ENCODE measurements at regions of chr1 and their contacts with region 1.

Region 1: DNA sequence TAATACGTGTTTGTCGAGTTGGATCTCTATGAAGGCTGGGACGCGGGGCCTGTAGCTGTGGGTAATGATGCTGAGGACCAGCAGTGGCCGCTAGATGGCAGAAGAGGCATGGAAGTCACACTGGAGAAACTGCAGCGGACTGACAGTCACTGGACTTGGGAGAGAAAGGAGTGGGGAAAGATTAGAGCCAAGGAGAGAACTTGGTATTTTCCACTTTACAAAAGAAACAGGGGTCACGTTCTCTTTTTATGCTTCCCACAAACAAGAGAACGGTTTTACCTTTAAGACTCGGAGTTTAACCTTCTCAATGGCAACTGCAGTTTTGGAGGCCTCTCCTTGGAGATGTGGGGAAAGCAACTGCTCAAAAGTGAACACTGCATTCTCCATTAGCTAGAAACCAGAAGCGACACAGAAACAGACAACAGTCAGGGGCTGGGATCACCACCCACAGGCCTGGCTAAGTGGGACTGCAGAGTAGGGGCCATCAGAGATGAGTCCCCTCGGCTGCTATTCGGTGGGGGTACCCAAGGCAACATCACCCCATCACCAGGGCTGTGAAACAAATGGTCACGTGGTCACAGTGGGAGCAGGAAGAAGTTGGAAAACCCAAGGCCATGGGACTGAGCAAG is 51.1 kb upstream of the EDEM3 start:
- DNase-seq: peak; percentile 69 to 91
- H3K4me3 ChIP-seq: no peak overlapping the region
- H3K27ac ChIP-seq: no peak overlapping the region
- H3K4me1 ChIP-seq: no peaks in the 10 kb centered on the region
- H3K27me3 ChIP-seq: no peaks in the 10 kb centered on the region
- CTCF ChIP-seq: peak; percentile 87 to 96 (median 93)
- EP300 ChIP-seq: no peak
- POLR2A ChIP-seq: no peak
- RAD21 ChIP-seq: peak; percentile 98 to 100

Region 2: DNA sequence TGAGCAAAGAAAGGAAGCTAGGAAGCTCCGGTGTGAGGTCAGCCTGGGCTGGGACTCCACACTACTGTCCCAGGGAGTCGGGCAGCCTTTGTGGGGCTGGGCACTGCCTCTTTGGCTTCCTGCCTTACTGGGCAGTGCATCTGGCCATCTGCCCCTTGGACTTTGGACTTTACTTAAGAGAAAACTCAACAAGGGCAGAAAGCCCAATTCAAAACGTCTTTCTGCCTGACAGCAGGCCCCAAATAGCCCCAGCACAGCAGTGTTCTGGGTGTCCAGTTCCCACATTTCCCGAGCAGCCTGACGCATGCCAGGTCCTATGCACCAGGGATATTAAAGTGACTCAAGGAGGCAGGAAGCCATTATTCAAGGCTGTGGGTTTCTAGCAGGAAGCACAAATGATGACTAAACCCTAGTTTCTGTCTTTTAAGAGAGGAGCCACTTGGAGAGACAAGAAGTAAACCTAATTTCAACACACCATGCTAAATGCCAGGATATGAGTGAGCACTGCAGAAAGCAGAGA is 13.3 kb before region 1 on chr1:
- CTCF ChIA-PET with region 1: interaction called, 17 read pairs
- POLR2A ChIA-PET with region 1: interaction called, 3 read pairs
- DNase-seq: no peak
- H3K4me3 ChIP-seq: no peak overlapping the region
- H3K27ac ChIP-seq: no peak overlapping the region
- H3K4me1 ChIP-seq: peaks cover 0 to 4% (median 0%) of the 10 kb centered on the region in 4 experiments; a peak in 1 of 7 replicates
- H3K27me3 ChIP-seq: no peaks in the 10 kb centered on the region
- CTCF ChIP-seq: no peak
- EP300 ChIP-seq: no peak
- POLR2A ChIP-seq: no peak
- RAD21 ChIP-seq: no peak

Region 3: DNA sequence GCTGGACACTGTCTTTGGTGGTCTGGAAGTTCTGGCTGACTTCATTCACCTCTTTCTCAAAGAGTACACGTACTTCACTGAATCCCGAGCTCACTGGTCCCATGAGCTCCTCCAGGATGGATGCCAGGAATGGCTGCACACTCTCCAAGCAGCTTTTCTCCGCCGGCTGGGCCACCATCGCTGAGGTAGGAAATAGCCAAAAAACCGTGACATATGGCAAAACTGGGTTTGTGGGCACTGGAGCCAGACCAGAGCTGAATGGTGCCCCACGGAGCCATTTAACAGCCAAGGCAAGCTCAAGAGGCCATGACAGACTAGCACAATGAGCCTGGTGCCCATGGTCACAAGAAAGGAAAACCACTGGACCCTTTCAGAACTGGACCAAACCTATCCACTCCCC is 12.9 kb after region 1 on chr1:
- CTCF ChIA-PET with region 1: interaction called, 10 read pairs
- POLR2A ChIA-PET with region 1: no interaction called
- DNase-seq: no peak
- H3K4me3 ChIP-seq: no peak overlapping the region
- H3K27ac ChIP-seq: no peak overlapping the region
- H3K4me1 ChIP-seq: no peaks in the 10 kb centered on the region
- H3K27me3 ChIP-seq: no peaks in the 10 kb centered on the region
- CTCF ChIP-seq: no peak
- EP300 ChIP-seq: no peak
- POLR2A ChIP-seq: no peak
- RAD21 ChIP-seq: no peak

Region 4: DNA sequence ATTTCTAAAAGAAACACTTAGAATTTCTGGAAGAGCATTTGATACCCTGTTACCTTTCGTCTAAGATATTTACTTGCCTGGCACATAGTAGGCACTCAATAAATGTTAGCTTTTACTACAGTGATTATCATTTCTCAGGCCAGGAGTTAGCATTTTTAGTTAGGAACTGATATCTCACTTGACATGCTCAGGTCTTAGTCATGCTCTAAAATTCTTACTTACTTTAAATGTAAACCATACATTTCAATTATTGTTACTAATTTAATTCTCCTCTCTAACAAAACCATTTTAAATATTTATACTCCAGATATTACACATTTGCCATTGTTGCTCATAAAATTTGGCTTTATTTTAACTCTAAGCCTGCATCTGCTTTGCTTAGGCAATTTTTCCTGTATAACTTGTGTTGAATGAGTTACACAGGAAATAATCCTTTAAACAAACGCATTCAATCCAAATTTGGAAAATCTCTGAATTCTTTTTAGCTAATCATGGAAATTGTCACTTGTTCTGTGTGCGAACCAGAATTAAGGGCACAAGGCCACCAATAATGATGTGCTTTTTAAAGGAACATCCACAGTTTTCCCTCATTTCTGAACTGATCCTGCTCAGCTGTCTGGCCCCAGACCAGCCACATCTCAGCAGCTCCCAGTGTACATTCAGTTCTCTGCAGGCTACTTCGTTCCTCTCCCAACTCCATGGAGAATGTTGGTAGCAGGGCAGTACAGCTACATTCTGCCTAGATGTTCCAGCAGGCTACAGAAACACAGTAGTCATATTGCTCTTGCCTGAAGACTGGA is 153.0 kb after region 1 on chr1:
- CTCF ChIA-PET with region 1: interaction called, 20 read pairs
- POLR2A ChIA-PET with region 1: no interaction called
- DNase-seq: no peak
- H3K4me3 ChIP-seq: no peak overlapping the region
- H3K27ac ChIP-seq: no peak overlapping the region
- H3K4me1 ChIP-seq: no peaks in the 10 kb centered on the region
- H3K27me3 ChIP-seq: no peaks in the 10 kb centered on the region
- CTCF ChIP-seq: no peak
- EP300 ChIP-seq: no peak
- POLR2A ChIP-seq: no peak
- RAD21 ChIP-seq: no peak

Region 5: DNA sequence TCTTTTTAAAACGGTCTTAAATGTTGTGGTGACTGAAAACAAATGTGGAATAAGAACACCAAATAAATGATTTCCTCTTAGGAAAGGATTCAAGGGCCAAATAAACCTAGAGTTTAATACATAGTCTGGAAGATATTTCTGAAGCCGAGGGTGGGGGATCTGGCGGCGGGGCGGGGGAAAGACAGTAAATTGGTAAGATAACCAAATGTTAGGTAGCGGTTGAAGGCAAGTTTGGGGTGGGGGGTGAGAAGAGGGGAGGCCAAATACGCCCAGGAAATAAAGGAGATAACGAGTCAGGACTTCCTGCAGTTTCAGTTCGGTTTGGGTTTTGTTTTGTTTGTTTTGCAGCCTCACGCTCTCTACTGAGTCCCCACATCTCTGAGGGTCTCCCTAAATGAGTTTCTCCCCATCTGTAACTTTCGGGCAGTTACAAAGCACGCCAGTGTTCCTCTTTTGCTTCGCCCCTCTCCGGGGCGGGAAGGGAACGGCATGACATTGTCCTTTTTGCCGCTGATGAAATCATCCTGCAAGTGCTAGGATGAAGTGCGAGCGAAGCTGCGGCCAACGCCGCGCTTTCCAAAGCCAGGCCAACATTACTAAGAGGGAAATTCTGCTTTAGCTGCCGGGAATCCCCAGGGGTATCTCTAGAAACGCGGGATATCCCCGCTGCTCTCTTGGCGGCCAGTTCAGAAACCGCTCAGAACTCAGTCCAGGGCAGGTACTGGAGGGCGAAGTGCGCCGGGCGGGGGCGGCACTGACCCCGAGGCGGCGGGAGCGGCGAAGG is 167.7 kb after region 1 on chr1:
- CTCF ChIA-PET with region 1: interaction called, 32 read pairs
- POLR2A ChIA-PET with region 1: interaction called, 3 read pairs
- DNase-seq: peak in 1 of 2 experiments; percentile 77
- H3K4me3 ChIP-seq: peak overlapping the region; percentile 62 to 91 (median 72)
- H3K27ac ChIP-seq: no peak overlapping the region
- H3K4me1 ChIP-seq: peaks cover 0 to 5% (median 1%) of the 10 kb centered on the region in 4 experiments; a peak in 3 of 7 replicates
- H3K27me3 ChIP-seq: peaks cover 3 to 22% (median 14%) of the 10 kb centered on the region in 4 experiments
- CTCF ChIP-seq: no peak
- EP300 ChIP-seq: no peak
- POLR2A ChIP-seq: peak; percentile 39 to 47; a peak in 2 of 3 replicates
- RAD21 ChIP-seq: no peak

Region 6: GRCh38 chr1:184982002-184982954 is 176.5 kb after region 1 on chr1:
- CTCF ChIA-PET with region 1: interaction called, 99 read pairs
- POLR2A ChIA-PET with region 1: no interaction called
- DNase-seq: peak in 1 of 2 experiments; percentile 75
- H3K4me3 ChIP-seq: no peak overlapping the region
- H3K27ac ChIP-seq: no peak overlapping the region
- H3K4me1 ChIP-seq: no peaks in the 10 kb centered on the region
- H3K27me3 ChIP-seq: no peaks in the 10 kb centered on the region
- CTCF ChIP-seq: peak; percentile 74 to 82 (median 80)
- EP300 ChIP-seq: no peak
- POLR2A ChIP-seq: no peak
- RAD21 ChIP-seq: peak; percentile 88 to 94

Measured in H1 (cell line).